HAP-1 (cell line): ENCODE measurements at regions of chr10 and their contacts with region 1.

Region 1: DNA sequence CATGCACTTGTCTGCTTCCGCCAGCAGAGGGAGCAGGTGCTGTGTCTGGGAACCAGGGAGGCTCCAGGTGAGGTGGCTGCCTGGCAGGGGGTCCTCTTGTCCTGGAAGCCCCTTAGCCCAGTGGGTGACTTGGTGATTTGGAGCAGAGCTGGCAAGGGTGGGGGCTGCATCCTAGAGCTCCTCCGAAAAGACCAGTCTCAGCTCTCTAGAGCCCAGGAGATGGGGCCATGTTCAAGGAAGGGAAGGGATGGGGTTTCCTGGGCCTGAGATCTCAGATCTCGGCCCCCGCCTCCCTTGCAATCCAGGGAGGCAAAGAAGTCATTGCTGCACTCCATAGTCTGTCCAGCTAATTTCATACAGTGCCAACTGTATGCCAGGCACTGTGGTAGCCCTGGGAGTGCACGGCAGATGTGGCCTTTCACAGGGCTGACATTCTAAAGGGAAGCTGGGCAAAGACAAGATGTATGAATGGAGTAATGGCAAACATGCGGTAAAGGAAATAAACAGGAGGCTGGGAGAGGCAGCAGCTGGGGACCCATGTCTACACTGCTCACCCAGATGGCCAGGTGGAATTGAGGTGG is 20.4 kb upstream of the SFRP5 start:
- DNase-seq: peak; percentile 15 to 77
- H3K4me3 ChIP-seq: no peak overlapping the region
- H3K4me1 ChIP-seq: no peaks in the 10 kb centered on the region
- H3K27me3 ChIP-seq: peaks cover 12% of the 10 kb centered on the region

Region 2: DNA sequence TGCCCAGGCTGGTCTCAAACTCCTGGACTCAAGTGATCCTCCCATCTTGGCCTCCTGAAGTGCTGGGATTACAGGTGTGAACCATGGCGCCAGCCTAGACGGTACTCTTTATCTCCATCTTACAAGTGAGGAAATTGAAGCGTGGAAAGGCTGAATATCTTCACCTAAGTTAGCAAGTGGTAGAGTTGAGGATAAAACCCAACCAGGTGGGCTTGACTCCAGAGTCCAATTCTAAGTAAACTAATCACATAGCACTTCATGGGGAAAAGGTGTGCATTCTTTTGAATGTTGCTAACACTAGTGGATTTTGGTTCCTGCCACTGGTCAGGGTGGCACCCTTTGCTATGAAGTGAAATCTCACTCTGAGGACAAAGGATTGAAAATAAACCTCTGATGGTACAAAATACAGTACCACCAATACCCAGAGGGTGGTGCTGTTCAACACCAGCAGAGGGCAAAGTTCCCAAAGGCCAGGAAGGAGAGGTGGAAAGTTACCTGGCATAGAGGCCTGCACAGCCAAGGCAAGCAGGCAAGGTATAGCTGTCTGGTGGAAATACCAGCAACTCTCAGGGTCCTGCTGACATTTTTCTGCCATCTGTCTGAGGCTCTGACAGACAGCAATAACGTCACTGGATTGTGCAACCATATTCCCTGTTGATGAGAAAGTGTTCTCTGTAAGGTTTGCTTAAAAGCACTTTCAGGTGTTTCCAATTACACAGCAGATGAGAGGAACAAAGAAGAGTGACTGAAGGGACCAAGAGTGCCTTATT is 328.7 kb before region 1 on chr10:
- in situ Hi-C with region 1: no loop called
- DNase-seq: peak; percentile 44 to 72
- H3K4me3 ChIP-seq: no peak overlapping the region
- H3K4me1 ChIP-seq: no peaks in the 10 kb centered on the region
- H3K27me3 ChIP-seq: no peaks in the 10 kb centered on the region

Region 3: DNA sequence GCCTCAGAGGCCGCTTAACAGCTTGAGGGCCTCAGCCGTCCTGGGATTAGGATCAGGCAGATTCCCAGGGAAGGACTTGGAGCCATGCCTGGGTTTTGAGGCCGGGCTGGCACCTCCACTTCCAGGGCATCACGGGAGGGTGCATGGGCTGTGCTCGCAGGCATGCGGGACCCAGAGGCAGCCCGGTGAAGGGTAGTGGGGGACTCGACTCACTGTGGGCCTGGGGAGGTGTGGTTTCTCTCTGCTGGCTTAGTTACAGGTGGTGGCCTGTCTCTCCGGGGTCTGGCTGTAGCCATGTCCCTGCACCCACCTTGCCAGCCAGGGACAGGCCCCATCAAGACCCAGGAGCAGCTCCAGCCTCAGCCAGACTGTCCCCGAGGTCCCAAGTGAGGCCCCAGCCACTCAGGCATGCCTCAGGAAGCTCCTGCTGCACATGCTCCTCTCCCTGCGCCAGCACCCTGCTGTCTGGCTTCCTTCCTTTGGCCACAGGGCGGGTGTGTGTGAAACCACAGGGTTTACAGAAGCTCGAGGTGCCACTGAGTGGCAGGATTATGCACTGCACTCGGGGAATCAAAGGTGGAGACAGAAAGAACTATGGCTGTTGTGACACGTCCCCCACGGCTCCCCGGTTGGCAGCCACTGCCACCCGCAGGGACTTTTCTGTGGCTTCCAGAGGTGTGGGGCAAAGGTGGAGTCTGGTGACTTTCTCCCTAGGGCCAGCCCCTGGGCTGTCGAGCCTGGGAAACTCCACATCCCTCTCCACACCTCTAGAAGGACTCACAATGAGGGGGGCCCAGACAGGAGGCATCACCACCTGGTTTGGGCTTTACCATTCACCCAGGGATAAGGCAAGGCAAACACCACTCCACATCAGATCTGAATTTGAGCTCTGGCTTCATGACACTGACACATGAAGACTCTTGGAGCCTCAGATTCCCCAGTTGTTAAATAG is 77.1 kb after region 1 on chr10:
- in situ Hi-C with region 1: loop called (anchors 5 kb)
- DNase-seq: peak in 1 of 2 experiments; percentile 63
- H3K4me3 ChIP-seq: no peak overlapping the region
- H3K4me1 ChIP-seq: no peaks in the 10 kb centered on the region
- H3K27me3 ChIP-seq: peaks cover 46% of the 10 kb centered on the region

Region 4: GRCh38 chr10:98074315-98074911 is 282.2 kb after region 1 on chr10:
- in situ Hi-C with region 1: no loop called
- DNase-seq: peak in 1 of 2 experiments; percentile 36
- H3K4me3 ChIP-seq: no peak overlapping the region
- H3K4me1 ChIP-seq: no peaks in the 10 kb centered on the region
- H3K27me3 ChIP-seq: peaks cover 2% of the 10 kb centered on the region; the same call in 1 of the 2 replicates